ENCODE measurements at regions of chr14 and their contacts with region 1.

Region 1: GRCh38 chr14:89027097-89027740 is 202.8 kb downstream of the TTC8 start:
- DNase-seq: peak; percentile 26 to 77 (median 57)
- ATAC-seq: peak; percentile 91
- H3K4me3 ChIP-seq: peak overlapping the region; percentile 33 to 61
- H3K4me3 Mint-ChIP-seq: peak overlapping the region; percentile 69
- H3K27ac ChIP-seq: no peak overlapping the region
- H3K27ac Mint-ChIP-seq: no peak overlapping the region
- H3K4me1 ChIP-seq: peaks cover 13% of the 10 kb centered on the region
- H3K4me1 Mint-ChIP-seq: peaks cover 3% of the 10 kb centered on the region
- H3K27me3 ChIP-seq: peaks cover 21 to 23% of the 10 kb centered on the region in 2 experiments
- H3K27me3 Mint-ChIP-seq: peaks cover 72% of the 10 kb centered on the region
- CTCF ChIP-seq: peak; percentile 74

Region 2: DNA sequence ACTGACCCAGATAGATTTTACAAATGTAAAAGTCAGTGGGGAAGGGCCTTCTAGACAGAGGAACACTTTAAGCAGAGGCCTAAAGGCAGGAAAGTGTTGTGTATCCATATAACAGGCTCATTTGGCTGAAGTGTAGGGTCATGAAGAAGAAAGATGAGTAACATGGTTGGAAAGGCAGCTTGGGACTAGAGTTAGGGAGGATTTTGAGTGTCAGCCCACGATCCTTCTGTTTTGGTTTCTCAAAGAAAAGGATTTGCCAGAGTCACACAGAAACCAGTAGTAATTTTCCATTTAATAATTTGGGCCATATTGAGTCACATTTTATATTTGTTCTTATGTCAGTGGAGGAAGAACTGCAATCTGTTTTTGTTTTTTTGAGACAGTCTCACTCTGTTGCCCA is 388.0 kb before region 1 on chr14:
- CTCF ChIA-PET with region 1: no interaction called
- POLR2A ChIA-PET with region 1: no interaction called
- intact Hi-C with region 1: no loop called
- DNase-seq: no peak
- ATAC-seq: no peak
- H3K4me3 ChIP-seq: no peak overlapping the region
- H3K4me3 Mint-ChIP-seq: no peak overlapping the region
- H3K27ac ChIP-seq: no peak overlapping the region
- H3K27ac Mint-ChIP-seq: no peak overlapping the region
- H3K4me1 ChIP-seq: no peaks in the 10 kb centered on the region
- H3K4me1 Mint-ChIP-seq: no peaks in the 10 kb centered on the region
- H3K27me3 ChIP-seq: no peaks in the 10 kb centered on the region
- H3K27me3 Mint-ChIP-seq: no peaks in the 10 kb centered on the region
- CTCF ChIP-seq: no peak

Region 3: DNA sequence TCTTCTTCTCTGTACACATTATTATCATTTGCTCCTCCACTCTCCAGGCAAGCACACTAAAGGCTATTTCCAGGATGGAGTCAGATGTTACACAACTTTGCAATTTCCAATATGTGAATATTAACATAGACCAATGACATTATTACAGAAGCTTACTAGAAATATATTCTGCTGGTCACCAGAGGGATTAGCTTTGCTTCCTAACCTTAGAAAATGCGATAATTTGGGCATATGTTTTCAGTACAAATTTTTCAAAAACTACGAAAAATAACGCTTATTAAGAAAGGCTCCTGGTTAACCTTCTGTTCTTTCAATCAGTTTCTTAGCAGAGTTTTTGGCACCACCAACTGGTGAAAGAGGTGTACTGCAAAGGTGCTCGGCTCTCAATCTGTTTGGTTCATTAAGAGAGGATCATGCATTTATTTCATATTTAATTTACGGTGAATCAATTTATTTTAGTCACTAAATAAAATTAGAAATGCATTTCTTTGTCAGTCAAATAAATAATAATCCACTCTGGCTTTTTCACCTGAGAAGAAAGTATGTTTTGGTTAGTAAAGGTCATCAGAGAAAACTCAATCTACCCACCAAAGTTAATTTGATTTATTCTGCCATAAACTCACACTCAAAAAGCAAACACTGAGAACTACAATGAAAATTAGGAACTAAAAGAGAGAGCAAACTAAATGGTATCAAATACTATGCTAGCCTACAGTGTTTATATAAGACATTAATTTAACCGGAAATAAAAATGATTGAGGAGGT is 888.1 kb after region 1 on chr14:
- CTCF ChIA-PET with region 1: interaction called, 49 read pairs
- POLR2A ChIA-PET with region 1: no interaction called
- intact Hi-C with region 1: loop called (anchors 1 kb)
- DNase-seq: peak; percentile 24 to 74 (median 60)
- ATAC-seq: peak; percentile 62
- H3K4me3 ChIP-seq: no peak overlapping the region
- H3K4me3 Mint-ChIP-seq: no peak overlapping the region
- H3K27ac ChIP-seq: no peak overlapping the region
- H3K27ac Mint-ChIP-seq: no peak overlapping the region
- H3K4me1 ChIP-seq: peaks cover 3% of the 10 kb centered on the region
- H3K4me1 Mint-ChIP-seq: peaks cover 3% of the 10 kb centered on the region
- H3K27me3 ChIP-seq: no peaks in the 10 kb centered on the region
- H3K27me3 Mint-ChIP-seq: peaks cover 2% of the 10 kb centered on the region
- CTCF ChIP-seq: peak; percentile 97

Region 4: GRCh38 chr14:89922031-89922907 is 895.0 kb after region 1 on chr14:
- CTCF ChIA-PET with region 1: interaction called, 49 read pairs
- POLR2A ChIA-PET with region 1: no interaction called
- intact Hi-C with region 1: no loop called
- DNase-seq: no peak
- ATAC-seq: no peak
- H3K4me3 ChIP-seq: no peak overlapping the region
- H3K4me3 Mint-ChIP-seq: no peak overlapping the region
- H3K27ac ChIP-seq: no peak overlapping the region
- H3K27ac Mint-ChIP-seq: no peak overlapping the region
- H3K4me1 ChIP-seq: no peaks in the 10 kb centered on the region
- H3K4me1 Mint-ChIP-seq: no peaks in the 10 kb centered on the region
- H3K27me3 ChIP-seq: no peaks in the 10 kb centered on the region
- H3K27me3 Mint-ChIP-seq: no peaks in the 10 kb centered on the region
- CTCF ChIP-seq: no peak